A673 (cell line): ENCODE measurements at regions of chr18 and their contacts with region 1.

Region 1: GRCh38 chr18:1663879-1664705 is 759.4 kb downstream of the ADCYAP1 start:
- DNase-seq: peak; percentile 75
- H3K4me3 ChIP-seq: no peak overlapping the region
- H3K27ac ChIP-seq: no peak overlapping the region
- H3K4me1 ChIP-seq: no peaks in the 10 kb centered on the region
- H3K27me3 ChIP-seq: peaks cover 10% of the 10 kb centered on the region
- CTCF ChIP-seq: peak; percentile 92

Region 2: DNA sequence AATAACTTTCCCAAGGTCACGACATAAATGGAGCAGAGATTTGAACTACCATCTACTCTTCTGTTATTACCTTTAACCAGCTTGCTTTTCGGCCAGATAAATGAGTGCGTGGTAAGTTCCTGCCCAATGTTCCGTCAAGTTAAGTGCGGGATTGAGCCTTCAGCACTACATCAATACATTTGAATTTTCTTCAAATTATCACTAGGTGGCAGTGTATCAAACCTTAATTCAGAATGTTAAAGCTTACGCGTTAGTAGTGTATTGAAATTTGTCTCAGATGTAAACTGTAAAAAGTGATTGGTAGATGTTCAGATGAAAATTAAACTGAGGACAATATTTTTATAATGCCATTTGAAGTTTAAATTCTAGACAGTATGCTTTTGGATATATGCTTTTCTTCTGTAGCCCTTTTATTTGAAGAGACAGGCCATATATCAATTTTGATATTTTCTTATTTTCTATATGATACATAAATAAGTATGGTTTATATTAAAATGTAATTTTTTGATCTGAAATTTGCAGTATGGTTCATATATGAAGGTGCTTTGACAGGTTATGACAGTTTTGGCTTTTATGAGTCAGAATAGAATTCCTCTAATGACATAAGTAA is 78.1 kb before region 1 on chr18:
- CTCF ChIA-PET with region 1: interaction called, 8 read pairs
- POLR2A ChIA-PET with region 1: no interaction called
- intact Hi-C with region 1: loop called (anchors 5 kb)
- DNase-seq: peak; percentile 60
- H3K4me3 ChIP-seq: no peak overlapping the region
- H3K27ac ChIP-seq: no peak overlapping the region
- H3K4me1 ChIP-seq: no peaks in the 10 kb centered on the region
- H3K27me3 ChIP-seq: peaks cover 8% of the 10 kb centered on the region
- CTCF ChIP-seq: peak; percentile 72